RWPE1 (cell line): ENCODE measurements at regions of chr17 and their contacts with region 1.

Region 1: GRCh38 chr17:17900615-17901520 is 64.1 kb upstream of the SREBF1 start:
- DNase-seq: peak; percentile 80
- H3K27ac ChIP-seq: peak overlapping the region; percentile 83
- CTCF ChIP-seq: no peak

Region 2: DNA sequence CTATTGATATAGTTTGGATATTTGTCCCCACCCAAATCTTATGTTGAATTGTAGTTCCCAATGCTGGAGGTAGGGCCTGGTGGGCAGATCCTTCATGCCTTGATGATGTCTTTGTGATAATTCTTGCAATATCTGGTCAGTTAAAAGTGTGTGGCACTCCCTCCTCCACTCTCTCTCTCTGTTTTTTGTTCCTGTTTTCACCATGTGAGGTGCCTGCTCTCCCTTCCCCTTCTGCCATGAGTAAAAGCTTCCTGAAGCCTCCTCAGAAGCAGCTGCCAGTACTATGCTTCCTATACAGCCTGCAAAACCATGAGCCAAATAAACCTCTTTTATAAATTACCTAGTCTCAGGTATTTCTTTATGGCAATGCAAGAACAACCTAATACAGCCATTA is 24.0 kb after region 1 on chr17:
- CTCF ChIA-PET with region 1: no interaction called
- POLR2A ChIA-PET with region 1: no interaction called
- DNase-seq: no peak
- H3K27ac ChIP-seq: no peak overlapping the region
- CTCF ChIP-seq: no peak

Region 3: DNA sequence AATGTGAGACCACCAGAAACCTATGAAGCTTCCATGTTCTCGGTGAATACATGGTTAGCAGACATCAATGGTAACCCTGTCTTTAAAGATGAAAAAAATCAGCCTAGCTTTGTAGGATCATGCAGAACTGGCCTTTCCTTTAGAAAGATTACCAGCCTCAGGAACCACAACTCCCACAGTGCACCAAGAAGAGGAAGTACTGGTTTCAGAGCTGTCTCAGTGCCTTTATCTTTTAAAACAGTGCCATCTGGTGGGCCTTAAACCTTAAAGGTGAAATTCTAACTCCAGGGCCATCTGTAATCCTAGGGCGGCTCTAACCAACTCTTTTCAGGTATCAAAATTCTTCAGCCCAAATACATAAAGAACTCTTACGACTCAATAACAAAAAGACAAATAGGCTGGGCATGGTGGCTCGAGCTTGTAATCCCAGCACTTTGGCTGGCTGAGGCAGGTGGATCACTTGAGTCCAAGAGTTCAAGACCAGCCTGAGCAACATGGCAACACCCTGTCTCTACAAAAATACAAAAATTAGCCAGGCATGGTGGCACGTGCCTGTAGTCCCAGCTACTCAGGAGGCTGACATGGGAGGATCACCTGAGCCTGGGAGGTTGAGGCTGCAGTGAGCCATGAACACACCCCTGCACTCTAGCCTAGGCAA is 132.7 kb after region 1 on chr17:
- CTCF ChIA-PET with region 1: no interaction called
- POLR2A ChIA-PET with region 1: interaction called, 11 read pairs
- DNase-seq: peak; percentile 76
- H3K27ac ChIP-seq: peak overlapping the region; percentile 33; the same call in 1 of the 2 replicates
- CTCF ChIP-seq: peak; percentile 48